ENCODE measurements at regions of chr9 and their contacts with region 1.

Region 1: DNA sequence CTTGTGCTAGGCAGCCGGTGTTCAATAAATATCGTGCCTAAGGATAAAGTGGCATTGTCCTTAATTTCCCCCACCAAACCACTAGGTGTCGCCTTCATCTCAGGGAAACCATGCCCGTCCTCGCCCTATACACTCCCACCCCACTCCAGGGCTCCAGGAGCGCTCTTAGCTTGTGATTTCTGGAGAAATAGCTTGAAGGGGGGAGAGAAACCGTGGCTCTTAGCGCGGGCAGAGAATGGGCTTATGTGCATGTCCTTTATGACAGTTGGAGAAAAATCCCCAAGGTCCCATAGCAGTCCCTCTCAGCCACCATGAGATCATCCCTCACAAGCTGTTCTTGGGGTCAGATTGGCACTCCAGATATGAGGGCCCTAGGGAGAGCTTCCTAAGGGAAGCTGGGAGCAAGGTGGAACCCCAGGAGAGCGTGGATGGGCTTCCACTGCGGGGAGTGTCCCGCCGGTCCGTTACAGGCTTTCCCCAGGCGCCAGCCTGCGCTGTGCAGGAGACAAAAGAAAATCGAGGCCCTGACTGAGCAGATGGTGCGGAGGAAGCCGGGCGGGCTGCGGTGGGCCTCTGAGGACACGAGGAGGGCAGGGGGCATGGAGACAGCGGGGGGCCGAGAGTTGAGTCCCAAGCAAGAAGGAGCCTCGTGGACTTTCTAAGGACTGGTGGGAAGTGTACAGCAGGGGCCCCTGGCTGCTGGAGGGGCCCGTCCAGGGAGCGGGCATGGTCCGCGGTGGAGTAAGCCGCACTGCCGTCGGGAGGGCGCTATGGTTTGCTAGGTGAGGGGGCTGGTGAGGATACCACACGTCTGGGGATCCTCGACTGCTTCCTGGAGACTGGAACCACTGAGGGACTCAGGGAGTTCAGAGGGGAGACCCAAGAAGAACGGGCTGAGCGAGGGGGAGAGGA is 750 bp upstream of the NPR2 start:
- DNase-seq: peak; percentile 60
- H3K4me3 ChIP-seq: no peak overlapping the region
- H3K27ac ChIP-seq: no peak overlapping the region
- H3K4me1 ChIP-seq: peaks cover 11% of the 10 kb centered on the region
- H3K27me3 ChIP-seq: no peaks in the 10 kb centered on the region
- CTCF ChIP-seq: peak; percentile 83

Region 2: DNA sequence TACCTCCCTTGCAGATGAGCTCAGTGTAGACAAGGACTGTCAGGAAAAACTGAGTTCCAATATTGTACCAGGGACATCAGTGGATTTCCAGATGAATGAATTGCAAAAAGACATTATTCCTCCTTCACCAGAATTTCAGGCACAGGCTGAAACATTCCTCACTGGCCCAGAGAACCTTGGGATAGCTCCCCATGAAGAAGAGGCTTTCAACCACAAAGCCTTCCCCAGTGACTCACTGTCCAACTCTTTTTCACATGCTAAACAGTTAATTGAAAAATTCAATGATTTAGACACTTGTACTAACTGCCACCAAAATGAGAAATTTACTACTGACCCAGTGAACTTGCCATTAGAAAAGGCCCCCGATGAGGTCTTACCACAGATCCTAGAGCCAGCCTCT is 484.4 kb before region 1 on chr9:
- CTCF ChIA-PET with region 1: no interaction called
- dilution Hi-C with region 1: no loop called
- in situ Hi-C with region 1: no loop called
- intact Hi-C with region 1: no loop called
- DNase-seq: no peak
- H3K4me3 ChIP-seq: no peak overlapping the region
- H3K27ac ChIP-seq: no peak overlapping the region
- H3K4me1 ChIP-seq: no peaks in the 10 kb centered on the region
- H3K27me3 ChIP-seq: no peaks in the 10 kb centered on the region
- CTCF ChIP-seq: no peak

Region 3: DNA sequence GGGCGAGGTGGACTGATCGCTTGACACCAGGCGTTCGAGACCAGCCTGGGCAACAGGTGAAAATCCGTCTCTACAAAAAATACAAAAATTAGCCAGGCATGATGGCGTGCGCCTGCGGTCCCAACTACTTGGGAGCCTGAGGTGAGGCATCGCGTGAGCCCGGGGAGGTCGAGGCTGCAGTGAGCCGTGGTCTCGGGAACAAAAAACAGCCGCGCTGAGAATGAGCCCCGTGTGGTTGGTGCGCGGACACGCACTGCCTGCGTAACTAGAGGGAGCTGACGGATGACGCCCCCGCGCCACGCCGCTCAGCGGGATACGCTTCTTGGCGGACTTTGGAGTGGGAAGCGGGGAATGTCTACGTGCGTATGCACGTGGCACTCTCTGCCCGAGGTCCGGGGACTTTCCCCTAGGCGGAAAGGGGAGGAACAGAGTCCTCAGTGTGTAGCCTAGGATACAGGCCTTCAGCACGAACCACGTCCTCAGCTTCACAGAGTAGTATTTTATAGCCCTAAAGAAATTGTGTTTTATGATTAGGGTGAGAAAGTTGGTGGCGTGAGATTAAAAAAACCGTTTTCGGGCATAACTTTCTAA is 133.0 kb before region 1 on chr9 and contains the start of gene RMRP:
- CTCF ChIA-PET with region 1: no interaction called
- dilution Hi-C with region 1: no loop called
- in situ Hi-C with region 1: no loop called
- intact Hi-C with region 1: loop called (anchors 1 kb)
- DNase-seq: peak; percentile 99
- H3K4me3 ChIP-seq: peak within 1 kb of the TSS; percentile 88 to 95 (median 94)
- H3K27ac ChIP-seq: peak within 1 kb of the TSS; percentile 100
- H3K4me1 ChIP-seq: peaks cover 26% of the 10 kb centered on the region
- H3K27me3 ChIP-seq: no peaks in the 10 kb centered on the region
- CTCF ChIP-seq: peak; percentile 2 to 25
- total RNA-seq, gene RMRP: 16,267 to 114,057 TPM

Region 4: DNA sequence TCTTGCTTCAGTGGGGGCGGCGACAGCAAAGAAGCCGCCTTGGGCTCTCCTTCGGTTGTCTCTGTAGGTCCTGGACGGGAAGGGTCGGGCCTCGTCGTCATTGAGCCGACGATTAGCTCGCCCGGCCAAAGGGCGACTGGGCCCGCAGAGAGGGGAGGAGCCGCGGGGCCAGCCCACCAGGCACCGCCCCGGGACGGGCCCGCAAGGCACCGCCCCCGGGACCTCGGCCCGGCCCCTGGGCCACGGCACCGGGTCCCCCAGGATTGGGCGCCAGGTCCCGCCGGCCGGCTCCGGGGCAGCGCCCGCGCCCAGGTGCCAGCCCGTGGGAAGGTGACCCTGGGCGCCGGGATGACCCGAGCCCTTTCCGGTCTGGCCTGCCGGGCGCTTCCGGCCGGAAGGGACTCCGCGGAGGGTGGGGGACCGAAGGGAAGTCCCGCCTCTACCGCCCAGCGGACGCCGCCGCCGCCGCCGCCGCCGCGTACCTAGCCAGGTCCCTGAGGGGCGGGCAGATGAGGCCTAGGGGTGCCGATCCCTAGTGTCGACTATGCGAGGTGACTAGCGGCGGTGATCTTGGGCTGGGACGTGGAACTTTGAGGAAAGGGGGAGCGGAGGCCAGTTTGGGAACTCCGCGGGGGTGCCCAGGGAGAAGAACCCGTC is 41.7 kb before region 1 on chr9 and contains the starts of genes GBA2 and RGP1:
- CTCF ChIA-PET with region 1: interaction called, 12 read pairs
- dilution Hi-C with region 1: no loop called
- in situ Hi-C with region 1: no loop called
- intact Hi-C with region 1: loop called (anchors 2 kb)
- DNase-seq: peak; percentile 79
- H3K4me3 ChIP-seq: peak within 1 kb of the TSS; percentile 66 to 83 (median 71)
- H3K27ac ChIP-seq: peak within 1 kb of the TSS; percentile 50
- H3K4me1 ChIP-seq: peaks cover 24% of the 10 kb centered on the region
- H3K27me3 ChIP-seq: no peaks in the 10 kb centered on the region
- CTCF ChIP-seq: no peak
- total RNA-seq, gene GBA2: 41.0 to 49.8 TPM
- total RNA-seq, gene RGP1: 20.5 to 42.3 TPM

Region 5: GRCh38 chr9:35774907-35775635 is 15.6 kb before region 1 on chr9:
- CTCF ChIA-PET with region 1: no interaction called
- dilution Hi-C with region 1: no loop called
- in situ Hi-C with region 1: no loop called
- intact Hi-C with region 1: no loop called
- DNase-seq: no peak
- H3K4me3 ChIP-seq: no peak overlapping the region
- H3K27ac ChIP-seq: no peak overlapping the region
- H3K4me1 ChIP-seq: peaks cover 14% of the 10 kb centered on the region
- H3K27me3 ChIP-seq: no peaks in the 10 kb centered on the region
- CTCF ChIP-seq: no peak

Region 6: GRCh38 chr9:35882263-35882848 is 91.7 kb after region 1 on chr9:
- CTCF ChIA-PET with region 1: interaction called, 31 read pairs
- dilution Hi-C with region 1: no loop called
- in situ Hi-C with region 1: loop called (anchors 5 kb)
- intact Hi-C with region 1: loop called (anchors 1 kb)
- DNase-seq: peak; percentile 46
- H3K4me3 ChIP-seq: no peak overlapping the region
- H3K27ac ChIP-seq: no peak overlapping the region
- H3K4me1 ChIP-seq: no peaks in the 10 kb centered on the region
- H3K27me3 ChIP-seq: no peaks in the 10 kb centered on the region
- CTCF ChIP-seq: peak; percentile 99